Sciatic nerve (tissue), 2 donors: ENCODE measurements at regions of chr7 and their contacts with region 1.

Region 1: GRCh38 chr7:67823345-67823744 is 826.7 kb downstream of the TYW1 start:
- DNase-seq: no peak
- ATAC-seq: no peak

Region 2: GRCh38 chr7:66429498-66430163 is 1393.7 kb before region 1 on chr7:
- intact Hi-C with region 1: loop called (anchors 10 kb)
- DNase-seq: no peak
- ATAC-seq: no peak